ENCODE measurements at regions of chr1 and their contacts with region 1.

Region 1: DNA sequence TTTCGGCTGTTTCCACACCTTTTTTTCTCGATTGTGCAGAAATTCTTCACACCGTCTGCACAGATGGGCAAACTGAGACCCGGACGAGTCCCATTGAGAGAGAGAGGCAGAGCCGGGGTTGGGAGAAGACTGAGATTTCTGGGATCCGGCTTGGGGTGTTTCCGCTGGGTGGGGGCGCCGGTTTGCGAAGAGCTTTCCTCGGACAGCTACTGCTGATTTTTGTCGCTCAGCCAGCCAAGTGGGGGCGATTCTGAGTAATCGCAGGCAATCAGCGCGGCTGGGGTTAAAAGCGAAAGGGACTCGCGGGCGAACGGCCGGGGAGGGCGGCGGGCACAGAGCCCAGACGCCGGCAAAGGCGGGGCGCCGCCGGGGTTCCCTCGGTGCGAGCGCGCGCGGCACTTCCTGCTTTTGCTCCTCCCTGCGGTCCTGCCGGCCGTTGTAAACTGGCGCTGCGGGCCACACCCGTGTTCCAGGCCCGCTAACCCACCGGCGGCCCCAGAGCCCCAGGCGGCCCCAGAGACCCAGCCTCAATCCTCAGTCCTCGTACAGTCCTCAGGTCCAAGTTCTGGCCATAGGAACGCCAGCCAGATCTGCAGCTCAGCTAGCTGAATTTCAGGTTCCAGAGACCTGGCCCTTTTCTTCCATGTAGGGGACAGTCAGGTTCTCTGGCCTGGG is 32.4 kb upstream of the JUN start:
- DNase-seq: peak; percentile 95
- ATAC-seq: peak; percentile 95

Region 2: GRCh38 chr1:58764294-58764978 is 51.8 kb before region 1 on chr1:
- intact Hi-C with region 1: no loop called
- DNase-seq: no peak
- ATAC-seq: no peak

Region 3: DNA sequence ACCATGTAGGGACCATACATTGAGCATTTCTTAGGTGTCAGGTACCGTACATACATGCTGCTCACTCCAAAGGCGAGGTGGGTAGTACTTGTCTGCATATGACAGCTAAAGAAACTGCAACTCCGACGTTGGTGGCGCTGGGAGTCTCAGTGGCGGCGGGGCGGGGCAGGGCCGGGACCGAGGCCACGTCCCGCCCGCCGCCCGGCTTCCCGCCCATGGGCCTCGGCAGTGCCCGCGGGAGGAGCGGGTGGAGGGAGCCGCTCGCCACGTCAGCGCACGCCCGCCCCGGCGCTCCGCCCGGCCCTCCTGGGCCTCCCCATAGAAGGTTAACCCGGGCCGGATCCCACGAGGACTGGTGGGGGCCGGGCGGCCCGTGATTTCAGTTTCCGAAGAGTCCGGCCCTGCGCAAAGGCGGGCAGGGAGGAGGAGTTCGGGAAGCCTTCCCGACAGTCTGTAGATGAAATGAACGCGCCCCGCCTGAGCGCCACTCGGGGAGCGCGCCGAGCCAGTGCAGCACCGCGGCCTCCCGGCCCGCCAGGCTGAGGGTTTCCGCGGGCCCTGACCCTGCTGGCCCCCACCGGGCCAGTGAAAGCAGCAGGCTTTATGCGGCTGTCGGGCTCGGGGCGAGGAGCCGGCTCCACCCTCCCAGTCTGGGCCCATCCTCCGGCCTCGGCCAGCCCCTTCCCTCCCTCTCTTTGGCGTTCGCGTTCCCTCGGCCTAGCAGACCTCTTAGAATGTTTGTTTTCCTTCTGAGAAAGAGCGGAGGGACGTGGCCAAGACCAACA is 87.5 kb after region 1 on chr1:
- intact Hi-C with region 1: loop called (anchors 5 kb)
- DNase-seq: peak; percentile 97
- ATAC-seq: peak; percentile 97